Caco-2 (cell line): ENCODE measurements at regions of chr2 and their contacts with region 1.

Region 1: GRCh38 chr2:9644603-9645002 is 13.8 kb upstream of the YWHAQ start:
- DNase-seq: peak; percentile 71 to 79
- H3K4me3 ChIP-seq: no peak overlapping the region
- H3K4me3 Mint-ChIP-seq: peak overlapping the region; percentile 59
- H3K27ac Mint-ChIP-seq: peak overlapping the region; percentile 83
- H3K4me1 ChIP-seq: peaks cover 25% of the 10 kb centered on the region
- H3K4me1 Mint-ChIP-seq: peaks cover 38% of the 10 kb centered on the region
- H3K27me3 ChIP-seq: no peaks in the 10 kb centered on the region
- H3K27me3 Mint-ChIP-seq: no peaks in the 10 kb centered on the region
- CTCF ChIP-seq: no peak

Region 2: DNA sequence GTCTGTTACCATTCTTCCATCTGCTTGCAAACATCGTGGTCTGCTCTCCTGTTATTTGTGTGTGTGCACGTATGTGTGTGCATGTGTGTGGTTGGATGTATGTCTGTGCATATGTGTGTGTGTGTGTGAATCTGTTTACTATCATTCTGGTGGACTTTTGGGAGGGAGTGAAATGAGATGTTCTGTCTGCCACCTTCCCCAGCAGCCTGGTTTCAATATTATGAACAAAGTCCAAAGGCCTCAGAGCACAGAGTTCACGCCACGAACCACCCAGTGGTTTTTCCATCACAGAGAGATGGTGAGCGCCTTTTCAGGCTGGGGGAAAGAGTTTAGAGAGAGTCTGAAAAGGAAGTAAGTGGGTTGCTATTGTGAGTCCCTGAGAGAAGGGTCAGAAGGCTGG is 53.3 kb after region 1 on chr2:
- CTCF ChIA-PET with region 1: no interaction called
- POLR2A ChIA-PET with region 1: no interaction called
- intact Hi-C with region 1: loop called (anchors 2 kb)
- DNase-seq: no peak
- H3K4me3 ChIP-seq: no peak overlapping the region
- H3K4me3 Mint-ChIP-seq: no peak overlapping the region
- H3K27ac Mint-ChIP-seq: peak overlapping the region; percentile 69
- H3K4me1 ChIP-seq: peaks cover 38% of the 10 kb centered on the region
- H3K4me1 Mint-ChIP-seq: peaks cover 19% of the 10 kb centered on the region
- H3K27me3 ChIP-seq: no peaks in the 10 kb centered on the region
- H3K27me3 Mint-ChIP-seq: no peaks in the 10 kb centered on the region
- CTCF ChIP-seq: no peak